Dorsolateral prefrontal cortex (tissue), 120 donors: ENCODE measurements at regions of chr2 and their contacts with region 1.

Region 1: GRCh38 chr2:38734299-38735058 is 16.7 kb downstream of the SRSF7 start:
- DNase-seq: no peak
- H3K4me3 ChIP-seq: no peak overlapping the region
- H3K27ac ChIP-seq: no peak overlapping the region
- H3K27me3 ChIP-seq: no peaks in the 10 kb centered on the region
- CTCF ChIP-seq: no peak

Region 2: DNA sequence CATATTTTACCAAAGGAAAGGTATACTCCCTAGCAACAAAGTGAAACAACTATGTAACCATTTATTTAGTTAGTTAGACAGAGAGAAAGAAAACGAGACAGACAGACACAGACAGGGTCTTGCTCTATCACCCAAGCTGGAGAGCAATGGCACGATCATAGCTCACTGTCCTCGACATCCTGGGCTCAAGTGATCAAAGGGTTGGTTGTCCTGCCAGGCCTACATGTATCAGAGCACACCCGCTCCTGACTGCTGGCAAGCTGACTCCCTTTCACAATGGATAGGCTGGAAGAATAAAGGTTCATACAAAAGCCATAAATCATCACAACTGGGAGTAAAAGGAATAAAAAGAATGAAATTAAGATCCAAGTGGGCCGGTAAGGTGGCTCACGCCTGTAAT is 410.9 kb before region 1 on chr2:
- intact Hi-C with region 1: loop called in 1 of 2 experiments (anchors 10 kb)
- DNase-seq: no peak
- H3K4me3 ChIP-seq: no peak overlapping the region
- H3K27ac ChIP-seq: no peak overlapping the region
- H3K27me3 ChIP-seq: no peaks in the 10 kb centered on the region
- CTCF ChIP-seq: no peak

Region 3: DNA sequence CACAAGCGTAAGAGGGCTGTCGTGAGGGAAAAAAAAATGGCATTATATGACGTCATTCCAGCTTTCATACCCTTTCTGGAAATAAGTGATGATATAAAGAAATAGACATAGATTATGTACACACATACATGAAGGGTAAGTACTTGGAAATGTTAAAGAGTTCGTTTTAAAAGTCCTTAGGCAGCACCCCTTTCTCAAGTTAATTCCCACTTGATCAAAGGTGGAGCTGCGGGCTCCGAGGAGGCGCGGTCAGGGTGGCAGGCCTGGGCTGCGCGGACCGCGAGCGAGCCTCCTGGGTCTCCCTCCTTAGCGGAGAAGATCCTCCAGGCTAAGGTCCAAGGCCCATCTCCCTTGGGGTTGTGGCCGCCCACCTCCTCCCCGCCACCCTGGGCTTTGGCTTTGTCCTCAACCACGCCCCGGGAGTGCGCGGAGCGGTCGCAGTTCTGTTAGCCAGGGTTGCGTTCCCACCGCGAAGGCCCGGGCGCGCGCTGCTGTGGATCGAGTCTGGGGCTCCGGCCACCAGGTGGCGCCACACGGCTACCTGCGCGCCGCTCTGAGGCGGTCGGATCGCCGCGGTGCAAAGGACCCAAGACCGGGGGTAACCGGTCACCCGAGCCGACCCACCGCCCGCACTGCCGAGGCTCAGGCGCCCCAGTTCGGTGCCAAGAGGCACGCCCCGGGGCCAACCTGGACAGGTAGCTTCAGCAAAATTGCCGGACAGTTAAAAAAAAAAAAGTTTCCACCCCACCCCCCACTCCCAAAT is 198.6 kb before region 1 on chr2:
- intact Hi-C with region 1: loop called (anchors 5 kb)
- DNase-seq: peak; percentile 59 to 83 (median 74)
- H3K4me3 ChIP-seq: peak overlapping the region; percentile 28 to 70 (median 58)
- H3K27ac ChIP-seq: peak overlapping the region in 17 of 59 donors; percentile 9 to 78 (median 44)
- H3K27me3 ChIP-seq: peaks cover 0 to 21% (median 0%) of the 10 kb centered on the region in 45 donors
- CTCF ChIP-seq: peak; percentile 55 to 98 (median 89)